Ovary (tissue), 10 donors: ENCODE measurements at regions of chr1 and their contacts with region 1.

Region 1: DNA sequence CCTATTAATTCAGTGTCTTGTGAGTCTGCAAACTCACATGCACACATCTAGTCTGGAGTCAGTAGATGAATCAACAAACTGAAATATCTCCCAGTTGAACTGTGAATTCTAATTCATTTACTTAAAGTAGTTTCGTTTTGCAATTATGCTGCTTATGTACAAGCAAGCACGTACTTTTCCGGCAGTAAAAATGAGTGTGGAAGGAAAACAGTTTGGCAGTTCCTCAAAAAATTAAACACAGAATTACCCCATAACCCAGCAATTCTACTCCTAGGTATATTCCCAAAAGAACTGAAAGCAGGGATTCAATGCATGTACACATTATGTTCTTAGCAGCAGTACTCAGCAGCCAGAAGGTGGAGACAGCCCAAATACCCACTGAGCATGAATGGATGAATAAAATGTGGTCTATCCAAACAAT is 49.3 kb downstream of the GNB1 start:
- DNase-seq: no peak
- H3K4me3 ChIP-seq: no peak overlapping the region
- H3K27ac ChIP-seq: no peak overlapping the region
- H3K4me1 ChIP-seq: peaks cover 8% of the 10 kb centered on the region
- H3K27me3 ChIP-seq: no peaks in the 10 kb centered on the region
- CTCF ChIP-seq: no peak
- EP300 ChIP-seq: no peak
- POLR2A ChIP-seq: no peak

Region 2: GRCh38 chr1:1796466-1796865 is 45.1 kb before region 1 on chr1:
- intact Hi-C with region 1: loop called in 1 of 4 experiments (anchors 5 kb)
- DNase-seq: no peak
- H3K4me3 ChIP-seq: no peak overlapping the region
- H3K27ac ChIP-seq: no peak overlapping the region
- H3K4me1 ChIP-seq: no peaks in the 10 kb centered on the region
- H3K27me3 ChIP-seq: no peaks in the 10 kb centered on the region
- CTCF ChIP-seq: no peak
- EP300 ChIP-seq: no peak
- POLR2A ChIP-seq: no peak

Region 3: DNA sequence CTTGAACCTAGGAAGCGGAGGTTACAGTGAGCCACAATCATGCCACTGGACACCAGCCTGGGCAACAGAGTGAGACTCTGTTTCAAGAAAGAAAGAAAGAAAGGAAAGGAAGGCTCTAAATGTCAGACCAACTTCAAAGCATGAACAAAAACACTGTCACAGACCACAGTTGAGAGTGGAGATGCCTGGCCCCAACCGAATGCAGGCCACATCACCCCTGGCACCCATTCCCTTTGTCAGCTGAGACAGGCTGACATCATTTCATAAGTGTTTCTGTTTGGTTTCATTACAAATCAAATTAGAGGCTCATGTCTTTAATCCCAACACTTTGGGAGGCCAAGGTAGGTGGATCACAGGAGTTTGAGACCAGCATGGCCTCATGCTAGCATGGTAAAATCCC is 34.7 kb before region 1 on chr1:
- intact Hi-C with region 1: no loop called
- DNase-seq: no peak
- H3K4me3 ChIP-seq: no peak overlapping the region
- H3K27ac ChIP-seq: no peak overlapping the region
- H3K4me1 ChIP-seq: no peaks in the 10 kb centered on the region
- H3K27me3 ChIP-seq: no peaks in the 10 kb centered on the region
- CTCF ChIP-seq: no peak
- EP300 ChIP-seq: no peak
- POLR2A ChIP-seq: no peak

Region 4: GRCh38 chr1:1873186-1873585 is 31.6 kb after region 1 on chr1:
- intact Hi-C with region 1: no loop called
- DNase-seq: peak in 1 of 5 donors; percentile 28
- H3K4me3 ChIP-seq: no peak overlapping the region
- H3K27ac ChIP-seq: no peak overlapping the region
- H3K4me1 ChIP-seq: peaks cover 32% of the 10 kb centered on the region
- H3K27me3 ChIP-seq: no peaks in the 10 kb centered on the region
- CTCF ChIP-seq: no peak
- EP300 ChIP-seq: no peak
- POLR2A ChIP-seq: no peak